ENCODE measurements at regions of chr7 and their contacts with region 1.

Region 1: DNA sequence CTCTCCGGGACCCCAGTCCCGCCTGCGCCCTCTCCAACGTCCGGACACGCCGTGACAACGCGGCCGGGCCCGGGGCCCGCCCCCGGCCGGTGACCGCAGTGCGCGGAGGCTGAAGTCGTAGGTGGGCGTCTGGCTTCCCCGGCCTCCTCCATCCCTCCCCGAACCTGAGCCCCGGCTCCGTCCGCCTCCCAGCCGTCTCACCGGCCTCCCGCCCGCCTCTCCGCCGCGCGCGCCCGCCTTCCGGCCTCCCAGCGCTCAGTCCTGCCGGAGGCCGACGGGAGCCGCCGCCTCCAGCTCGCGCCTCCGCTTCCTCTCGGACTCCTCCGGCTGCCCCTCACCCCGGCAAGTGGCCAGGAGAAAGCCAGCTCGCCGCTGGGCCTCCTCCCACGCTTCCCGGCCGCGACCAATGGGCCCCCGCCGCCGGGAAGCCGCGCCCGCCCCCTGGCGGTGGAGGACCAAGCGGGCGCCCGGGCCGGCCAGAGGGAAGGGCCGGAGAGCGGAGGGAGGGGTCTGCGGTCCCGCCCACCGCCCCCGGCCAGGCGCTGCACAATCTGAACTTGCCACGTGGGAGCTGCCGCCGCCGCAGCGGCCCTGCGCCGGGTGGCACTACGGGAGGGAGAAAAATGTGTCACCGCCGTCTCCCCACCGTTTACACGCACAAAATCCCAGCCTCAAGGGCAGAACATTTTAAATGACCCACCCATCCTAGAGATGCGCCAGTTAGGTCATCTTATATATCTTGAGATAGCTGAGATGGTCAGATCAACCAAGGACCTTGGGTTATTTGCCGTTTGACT is at the start of gene FAM3C:
- DNase-seq: peak; percentile 76
- ATAC-seq: peak; percentile 91
- H3K4me3 Mint-ChIP-seq: peak within 1 kb of the TSS; percentile 80
- H3K27ac Mint-ChIP-seq: peak within 1 kb of the TSS; percentile 85
- H3K4me1 Mint-ChIP-seq: peaks cover 34% of the 10 kb centered on the region
- H3K27me3 Mint-ChIP-seq: no peaks in the 10 kb centered on the region
- total RNA-seq, gene FAM3C: 18.0 to 18.4 TPM

Region 2: GRCh38 chr7:121366852-121367431 is 29.2 kb before region 1 on chr7:
- CTCF ChIA-PET with region 1: interaction called, 81 read pairs
- POLR2A ChIA-PET with region 1: interaction called, 6 read pairs
- DNase-seq: peak; percentile 47
- ATAC-seq: peak; percentile 36
- H3K4me3 Mint-ChIP-seq: no peak overlapping the region
- H3K27ac Mint-ChIP-seq: no peak overlapping the region
- H3K4me1 Mint-ChIP-seq: peaks cover 35% of the 10 kb centered on the region
- H3K27me3 Mint-ChIP-seq: no peaks in the 10 kb centered on the region

Region 3: GRCh38 chr7:121385800-121386179 is 10.4 kb before region 1 on chr7:
- CTCF ChIA-PET with region 1: interaction called, 45 read pairs
- POLR2A ChIA-PET with region 1: interaction called, 6 read pairs
- DNase-seq: no peak
- ATAC-seq: peak; percentile 73
- H3K4me3 Mint-ChIP-seq: no peak overlapping the region
- H3K27ac Mint-ChIP-seq: no peak overlapping the region
- H3K4me1 Mint-ChIP-seq: peaks cover 44% of the 10 kb centered on the region
- H3K27me3 Mint-ChIP-seq: no peaks in the 10 kb centered on the region

Region 4: GRCh38 chr7:121530227-121531174 is 134.3 kb after region 1 on chr7:
- CTCF ChIA-PET with region 1: interaction called, 19 read pairs
- POLR2A ChIA-PET with region 1: no interaction called
- DNase-seq: peak; percentile 71
- ATAC-seq: peak; percentile 99
- H3K4me3 Mint-ChIP-seq: peak overlapping the region; percentile 32
- H3K27ac Mint-ChIP-seq: peak overlapping the region; percentile 90
- H3K4me1 Mint-ChIP-seq: peaks cover 30% of the 10 kb centered on the region
- H3K27me3 Mint-ChIP-seq: peaks cover 6% of the 10 kb centered on the region